ENCODE measurements at regions of chr1 and their contacts with region 1.

Region 1: GRCh38 chr1:27671964-27672749 is at the start of gene IFI6:
- DNase-seq: peak; percentile 88
- ATAC-seq: peak; percentile 97
- total RNA-seq, gene IFI6: 45.9 TPM

Region 2: GRCh38 chr1:26477446-26478152 is 1194.6 kb before region 1 on chr1:
- intact Hi-C with region 1: no loop called
- DNase-seq: no peak
- ATAC-seq: no peak

Region 3: GRCh38 chr1:27402349-27402754 is 269.8 kb before region 1 on chr1:
- intact Hi-C with region 1: loop called (anchors 5 kb)
- DNase-seq: peak; percentile 86
- ATAC-seq: peak; percentile 62

Region 4: GRCh38 chr1:27725374-27726173 is 53.4 kb after region 1 on chr1 and contains the start of gene FAM76A:
- intact Hi-C with region 1: loop called (anchors 10 kb)
- DNase-seq: peak; percentile 100
- ATAC-seq: peak; percentile 98
- total RNA-seq, gene FAM76A: 18.3 TPM